Astrocyte of the cerebellum (primary cell): ENCODE measurements at regions of chr2 and their contacts with region 1.

Region 1: DNA sequence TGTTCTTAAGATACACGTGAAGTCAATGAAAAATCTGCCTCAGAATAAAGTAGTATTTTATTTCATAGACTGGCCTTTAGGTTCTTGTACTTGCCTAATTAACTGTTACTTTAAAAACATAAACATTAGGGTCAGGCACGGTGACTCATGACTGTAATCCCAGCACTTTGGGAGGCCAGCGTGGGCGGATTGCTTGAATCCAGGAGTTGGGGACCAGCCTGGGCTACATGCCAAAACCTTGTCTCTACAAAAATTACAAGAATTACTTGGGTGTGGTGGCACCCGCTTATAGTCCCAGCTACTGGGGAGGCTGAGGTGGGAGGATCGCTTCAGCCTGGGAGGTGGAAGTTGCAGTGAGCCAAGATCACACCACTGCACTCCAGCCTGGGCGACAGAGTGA is 16.0 kb upstream of the SNORC start:
- DNase-seq: peak; percentile 42
- H3K4me3 ChIP-seq: no peak overlapping the region
- CTCF ChIP-seq: no peak

Region 2: DNA sequence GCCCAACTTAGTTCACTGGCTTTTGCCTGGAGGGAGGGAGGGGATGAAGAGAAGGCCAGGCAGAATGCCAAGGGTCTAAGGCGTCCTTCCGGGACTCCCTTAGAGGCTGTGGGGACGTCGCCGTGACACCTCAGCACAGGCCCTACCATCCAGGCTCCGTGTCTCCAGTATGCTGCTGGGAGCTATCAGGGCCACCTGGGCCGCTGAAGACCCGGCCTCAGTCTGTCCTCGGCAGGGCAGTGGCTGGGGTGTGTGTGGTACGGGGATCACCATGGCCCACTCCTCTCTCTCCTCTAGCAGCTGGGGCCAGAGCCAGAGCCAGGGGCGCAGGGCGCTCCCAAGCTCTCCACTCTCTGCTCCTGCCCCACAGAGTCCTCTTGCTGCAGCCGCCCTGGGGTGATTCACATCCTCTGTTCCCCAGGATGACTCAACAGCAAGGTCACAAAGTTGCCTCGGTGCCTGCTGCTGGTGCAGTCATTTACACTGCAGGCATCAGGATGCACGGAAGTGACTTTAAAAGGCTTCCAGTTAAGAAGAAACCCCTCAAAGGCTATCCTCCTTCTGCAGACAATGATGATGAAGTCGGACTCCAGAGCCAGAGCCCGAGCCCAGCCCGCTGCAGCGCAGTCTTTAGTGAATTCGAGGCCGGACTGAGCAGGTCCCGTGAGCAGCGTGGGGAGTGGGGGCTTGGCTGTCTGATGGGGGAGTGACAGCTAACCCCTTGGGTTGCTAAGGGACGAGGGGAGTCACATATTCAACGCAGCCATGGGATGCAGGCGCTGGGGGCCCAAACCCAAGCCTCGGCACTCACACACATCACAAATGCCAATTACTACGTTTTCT is 47.9 kb after region 1 on chr2:
- in situ Hi-C with region 1: no loop called
- DNase-seq: peak; percentile 47
- H3K4me3 ChIP-seq: no peak overlapping the region
- CTCF ChIP-seq: no peak

Region 3: GRCh38 chr2:232927793-232928550 is 73.9 kb after region 1 on chr2:
- in situ Hi-C with region 1: no loop called
- DNase-seq: no peak
- H3K4me3 ChIP-seq: peak overlapping the region; percentile 31
- CTCF ChIP-seq: no peak

Region 4: GRCh38 chr2:233247765-233248164 is 393.7 kb after region 1 on chr2:
- in situ Hi-C with region 1: loop called (anchors 25 kb)
- DNase-seq: no peak
- H3K4me3 ChIP-seq: no peak overlapping the region
- CTCF ChIP-seq: no peak